Calu3 (cell line): ENCODE measurements at regions of chr2 and their contacts with region 1.

Region 1: GRCh38 chr2:190804182-190804795 is 76.3 kb upstream of the GLS start:
- DNase-seq: peak; percentile 32
- H3K4me3 Mint-ChIP-seq: no peak overlapping the region
- H3K27ac Mint-ChIP-seq: no peak overlapping the region
- H3K4me1 Mint-ChIP-seq: peaks cover 45% of the 10 kb centered on the region
- H3K27me3 Mint-ChIP-seq: no peaks in the 10 kb centered on the region
- CTCF ChIP-seq: peak; percentile 55

Region 2: GRCh38 chr2:190382851-190383250 is 421.4 kb before region 1 on chr2:
- CTCF ChIA-PET with region 1: no interaction called
- intact Hi-C with region 1: loop called (anchors 2 kb)
- DNase-seq: peak; percentile 50
- H3K4me3 Mint-ChIP-seq: no peak overlapping the region
- H3K27ac Mint-ChIP-seq: no peak overlapping the region
- H3K4me1 Mint-ChIP-seq: no peaks in the 10 kb centered on the region
- H3K27me3 Mint-ChIP-seq: no peaks in the 10 kb centered on the region
- CTCF ChIP-seq: peak; percentile 42

Region 3: GRCh38 chr2:190528521-190529001 is 275.7 kb before region 1 on chr2:
- CTCF ChIA-PET with region 1: no interaction called
- intact Hi-C with region 1: loop called (anchors 10 kb)
- DNase-seq: no peak
- H3K4me3 Mint-ChIP-seq: no peak overlapping the region
- H3K27ac Mint-ChIP-seq: no peak overlapping the region
- H3K4me1 Mint-ChIP-seq: peaks cover 34% of the 10 kb centered on the region
- H3K27me3 Mint-ChIP-seq: no peaks in the 10 kb centered on the region
- CTCF ChIP-seq: no peak

Region 4: GRCh38 chr2:190636373-190636772 is 167.9 kb before region 1 on chr2:
- CTCF ChIA-PET with region 1: no interaction called
- intact Hi-C with region 1: loop called (anchors 2 kb)
- DNase-seq: peak; percentile 28
- H3K4me3 Mint-ChIP-seq: no peak overlapping the region
- H3K27ac Mint-ChIP-seq: peak overlapping the region; percentile 9
- H3K4me1 Mint-ChIP-seq: peaks cover 26% of the 10 kb centered on the region
- H3K27me3 Mint-ChIP-seq: no peaks in the 10 kb centered on the region
- CTCF ChIP-seq: no peak

Region 5: GRCh38 chr2:190698895-190699294 is 105.4 kb before region 1 on chr2:
- CTCF ChIA-PET with region 1: no interaction called
- intact Hi-C with region 1: loop called (anchors 5 kb)
- DNase-seq: peak; percentile 20
- H3K4me3 Mint-ChIP-seq: no peak overlapping the region
- H3K27ac Mint-ChIP-seq: no peak overlapping the region
- H3K4me1 Mint-ChIP-seq: peaks cover 7% of the 10 kb centered on the region
- H3K27me3 Mint-ChIP-seq: no peaks in the 10 kb centered on the region
- CTCF ChIP-seq: peak; percentile 28

Region 6: DNA sequence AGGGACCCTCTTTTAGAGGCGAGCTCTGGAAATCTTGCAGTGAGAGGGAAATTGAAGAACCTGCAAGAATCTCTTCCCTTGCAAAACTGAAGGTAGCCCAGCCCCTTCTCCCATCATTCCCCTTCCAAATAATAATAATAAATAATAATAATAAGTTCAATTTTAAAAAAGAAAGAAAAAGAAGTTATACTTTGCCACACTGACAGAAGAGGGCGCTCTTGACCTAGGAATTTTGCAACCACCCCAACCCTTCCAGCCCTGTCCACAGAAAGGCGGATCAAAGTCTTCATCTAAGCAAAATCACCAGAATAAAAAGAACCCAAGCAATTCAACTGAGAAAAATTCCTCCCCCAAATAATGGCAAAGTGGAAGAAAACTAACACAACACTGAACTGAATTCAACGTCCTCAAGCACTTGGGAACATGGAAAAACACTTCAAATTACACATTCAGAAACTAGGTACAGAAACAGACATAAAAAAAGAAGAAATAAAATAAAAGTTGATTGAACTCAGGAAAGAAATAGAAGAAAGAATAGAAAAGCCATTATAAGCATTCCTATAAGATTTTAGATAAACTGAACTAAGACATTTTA is 22.6 kb before region 1 on chr2:
- CTCF ChIA-PET with region 1: no interaction called
- intact Hi-C with region 1: loop called (anchors 1 kb)
- DNase-seq: peak; percentile 69
- H3K4me3 Mint-ChIP-seq: no peak overlapping the region
- H3K27ac Mint-ChIP-seq: no peak overlapping the region
- H3K4me1 Mint-ChIP-seq: peaks cover 13% of the 10 kb centered on the region
- H3K27me3 Mint-ChIP-seq: peaks cover 8% of the 10 kb centered on the region
- CTCF ChIP-seq: peak; percentile 77